K562 (cell line): ENCODE measurements at regions of chr12 and their contacts with region 1.

Region 1: DNA sequence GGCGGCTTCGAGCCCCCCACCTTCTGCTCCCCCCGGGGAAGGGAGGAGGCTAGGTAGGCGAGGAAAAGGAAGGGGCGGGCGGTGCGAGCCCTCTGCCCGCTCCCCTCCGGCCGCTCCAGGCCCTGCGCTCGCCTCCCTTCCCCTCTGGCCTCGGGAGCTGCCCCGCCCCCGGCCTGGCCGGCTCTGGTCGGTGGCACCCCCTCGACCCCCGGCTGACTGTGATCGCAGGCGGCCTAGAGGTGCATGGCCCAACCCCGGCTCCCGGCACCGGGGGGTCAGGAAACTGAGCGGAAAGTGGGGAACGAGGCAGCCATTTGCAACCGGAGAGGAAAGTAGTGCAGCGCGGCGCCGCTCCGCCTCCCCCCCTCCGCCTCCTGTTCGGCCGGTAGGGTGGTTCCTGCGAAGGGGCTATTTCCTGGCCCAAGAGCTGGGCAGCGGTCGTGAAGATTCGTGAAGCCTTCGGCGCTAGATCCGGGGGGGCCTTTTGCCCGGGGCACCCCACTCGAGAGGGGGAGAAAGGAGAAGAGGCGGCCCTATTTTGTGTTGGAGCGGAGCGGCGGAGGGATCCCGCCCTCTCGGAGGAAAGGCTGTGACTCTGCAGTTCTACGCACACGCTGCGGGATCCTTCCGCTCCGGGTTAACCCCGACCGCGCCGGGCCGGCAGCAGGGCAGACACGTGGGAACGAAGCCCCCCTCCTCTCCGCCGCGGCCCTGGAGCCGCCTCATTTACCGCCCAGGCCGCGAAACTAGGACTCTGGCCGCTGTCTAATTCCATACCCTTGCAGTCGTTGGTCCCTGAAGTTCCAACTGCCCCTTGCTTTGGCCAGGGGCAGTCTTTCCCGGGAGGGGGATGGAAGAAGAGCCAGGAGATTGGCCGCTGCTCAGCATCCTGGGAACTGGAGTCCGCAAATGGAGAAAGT is at the start of gene KMT2D:
- DNase-seq: peak; percentile 89 to 96 (median 91)
- ATAC-seq: peak; percentile 72
- H3K4me3 ChIP-seq: peak within 1 kb of the TSS; percentile 94
- H3K27ac ChIP-seq: peak within 1 kb of the TSS; percentile 98
- H3K4me1 ChIP-seq: peaks cover 15 to 20% of the 10 kb centered on the region in 2 experiments; a peak in 4 of 5 replicates
- H3K27me3 ChIP-seq: no peaks in the 10 kb centered on the region
- CTCF ChIP-seq: 0 out of 6 replicates have a peak, but pooled peaks of 2 of the 3 experiments have one; percentile 6 to 13
- EP300 ChIP-seq: peak; percentile 53; the same call in 1 of the 2 replicates
- POLR2A ChIP-seq: peak; percentile 88
- RAD21 ChIP-seq: no peak
- polyA plus RNA-seq, gene KMT2D: 0.22 to 1.4 TPM

Region 2: DNA sequence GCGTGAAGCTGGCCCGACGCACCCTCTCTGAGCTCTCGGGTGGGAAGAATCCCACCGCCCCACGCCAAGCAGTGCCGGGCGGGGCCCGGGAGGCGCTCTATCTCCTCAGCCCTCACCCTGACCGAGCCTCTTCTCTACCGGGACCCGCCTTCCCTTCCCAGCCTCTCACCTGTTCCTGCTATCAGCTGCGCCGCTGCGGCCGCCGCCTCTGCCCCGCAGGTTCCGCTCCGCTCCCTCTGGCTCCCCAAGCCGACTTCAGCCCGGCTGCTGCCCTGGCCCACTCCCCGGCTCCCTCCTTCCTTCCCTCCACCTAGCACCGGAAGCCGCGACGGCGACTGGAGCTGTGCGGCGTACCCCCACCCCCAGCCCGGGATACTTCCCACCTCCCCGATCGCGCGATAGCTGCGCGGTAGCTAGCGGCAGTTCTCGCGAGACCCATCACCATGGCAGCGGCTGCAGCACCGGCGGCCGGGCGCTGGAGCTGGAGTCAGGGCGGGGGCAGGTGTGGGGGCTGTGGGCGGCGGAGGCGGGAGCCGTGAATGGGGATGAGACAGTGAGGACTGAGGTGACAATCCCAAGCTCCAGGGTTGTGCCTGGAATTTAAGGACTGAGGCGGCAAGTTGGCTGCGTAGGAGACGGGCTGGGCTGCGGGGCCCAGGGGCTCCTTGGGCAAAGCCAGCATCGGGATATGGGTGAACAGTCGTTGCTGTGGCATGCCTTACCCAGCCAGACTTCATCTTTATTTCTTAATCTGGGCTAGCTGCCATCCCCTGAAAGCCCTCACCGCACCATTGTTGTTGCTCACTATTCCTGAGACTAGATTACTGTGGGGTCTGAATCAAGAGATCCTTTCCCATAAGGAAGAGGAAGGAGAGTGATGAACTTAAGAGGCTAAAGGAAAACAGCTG is 103.1 kb before region 1 on chr12 and contains the start of gene ARF3:
- CTCF ChIA-PET with region 1: no interaction called
- POLR2A ChIA-PET with region 1: no interaction called
- in situ Hi-C with region 1: no loop called
- intact Hi-C with region 1: no loop called
- DNase-seq: peak; percentile 96 to 97 (median 97)
- ATAC-seq: peak; percentile 94
- H3K4me3 ChIP-seq: peak within 1 kb of the TSS; percentile 89
- H3K27ac ChIP-seq: peak within 1 kb of the TSS; percentile 71
- H3K4me1 ChIP-seq: peaks cover 9 to 20% of the 10 kb centered on the region in 2 experiments; a peak in 4 of 5 replicates
- H3K27me3 ChIP-seq: no peaks in the 10 kb centered on the region
- CTCF ChIP-seq: peak in 2 of 3 experiments; percentile 4 to 48; a peak in 2 of 6 replicates
- EP300 ChIP-seq: no peak
- POLR2A ChIP-seq: peak; percentile 85
- RAD21 ChIP-seq: no peak
- polyA plus RNA-seq, gene ARF3: 5.9 to 7.4 TPM

Region 3: DNA sequence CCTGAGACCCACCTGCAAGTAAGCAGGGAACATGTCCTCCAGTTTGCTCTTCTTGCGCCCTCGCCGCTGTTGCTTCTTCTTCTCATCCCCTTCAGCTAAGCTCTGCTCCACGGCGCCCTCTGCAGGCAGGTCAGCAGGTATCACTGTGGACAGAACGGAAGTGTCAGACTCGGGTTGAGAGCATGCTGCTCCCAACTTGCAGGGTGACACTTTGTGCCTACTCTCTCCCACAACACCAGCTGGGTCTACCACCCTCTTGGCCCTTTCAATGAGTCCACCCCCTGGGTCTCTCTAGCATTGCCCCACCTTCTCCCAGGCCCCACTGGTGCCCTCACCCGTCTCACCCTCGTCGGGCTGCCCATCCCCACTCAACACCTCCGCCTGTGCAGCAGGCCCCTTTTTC is 16.6 kb before region 1 on chr12:
- CTCF ChIA-PET with region 1: no interaction called
- POLR2A ChIA-PET with region 1: interaction called, 21 read pairs
- in situ Hi-C with region 1: no loop called
- intact Hi-C with region 1: no loop called
- DNase-seq: peak; percentile 75 to 86 (median 80)
- ATAC-seq: peak; percentile 95
- H3K4me3 ChIP-seq: no peak overlapping the region
- H3K27ac ChIP-seq: no peak overlapping the region
- H3K4me1 ChIP-seq: no peaks in the 10 kb centered on the region
- H3K27me3 ChIP-seq: no peaks in the 10 kb centered on the region
- CTCF ChIP-seq: peak; percentile 79 to 94 (median 84)
- EP300 ChIP-seq: no peak
- POLR2A ChIP-seq: no peak
- RAD21 ChIP-seq: peak in 1 of 2 experiments; percentile 51; a peak in 2 of 4 replicates

Region 4: GRCh38 chr12:49049566-49050413 is 10.7 kb before region 1 on chr12:
- CTCF ChIA-PET with region 1: no interaction called
- POLR2A ChIA-PET with region 1: interaction called, 21 read pairs
- in situ Hi-C with region 1: no loop called
- intact Hi-C with region 1: no loop called
- DNase-seq: no peak
- ATAC-seq: no peak; the same call in 2 of the 3 replicates
- H3K4me3 ChIP-seq: no peak overlapping the region
- H3K27ac ChIP-seq: no peak overlapping the region; the same call in 2 of the 3 replicates
- H3K4me1 ChIP-seq: 0 out of 5 replicates have a peak, but pooled peaks cover 0 to 4% of the 10 kb centered on the region in 2 experiments
- H3K27me3 ChIP-seq: no peaks in the 10 kb centered on the region
- CTCF ChIP-seq: no peak
- EP300 ChIP-seq: no peak
- POLR2A ChIP-seq: peak; percentile 36; the same call in 1 of the 2 replicates
- RAD21 ChIP-seq: no peak

Region 5: DNA sequence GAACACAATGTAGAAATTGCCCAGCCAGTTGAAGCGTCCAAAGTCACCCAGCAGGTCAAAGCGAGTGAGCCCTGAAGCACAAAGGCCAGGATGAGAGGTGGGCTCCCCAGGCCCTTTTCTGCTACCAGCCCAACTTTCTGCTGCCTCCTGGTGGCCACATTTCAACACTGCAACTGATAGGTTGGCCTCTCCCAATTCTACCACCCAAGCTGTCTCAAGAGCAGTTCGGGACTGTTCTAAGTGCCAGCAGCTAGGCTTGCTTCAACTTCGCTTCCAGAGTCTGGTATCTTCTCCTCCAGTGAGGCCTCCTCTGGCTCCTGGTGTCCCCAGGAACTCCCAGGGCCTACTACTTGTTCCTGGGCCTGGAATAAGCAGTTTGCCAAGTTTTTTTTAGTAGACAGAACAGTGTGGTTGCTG is 37.5 kb after region 1 on chr12:
- CTCF ChIA-PET with region 1: interaction called, 7 read pairs
- POLR2A ChIA-PET with region 1: interaction called, 5 read pairs
- in situ Hi-C with region 1: loop called (anchors 5 kb)
- intact Hi-C with region 1: loop called (anchors 1 kb)
- DNase-seq: peak; percentile 68 to 78 (median 74)
- ATAC-seq: peak; percentile 76
- H3K4me3 ChIP-seq: no peak overlapping the region
- H3K27ac ChIP-seq: no peak overlapping the region; the same call in 2 of the 3 replicates
- H3K4me1 ChIP-seq: peaks cover 27 to 28% of the 10 kb centered on the region in 2 experiments
- H3K27me3 ChIP-seq: no peaks in the 10 kb centered on the region
- CTCF ChIP-seq: peak; percentile 86 to 94 (median 89)
- EP300 ChIP-seq: no peak
- POLR2A ChIP-seq: no peak
- RAD21 ChIP-seq: peak; percentile 64 to 85

Region 6: GRCh38 chr12:49369411-49370145 is 309.1 kb after region 1 on chr12:
- CTCF ChIA-PET with region 1: no interaction called
- POLR2A ChIA-PET with region 1: no interaction called
- in situ Hi-C with region 1: no loop called
- intact Hi-C with region 1: no loop called
- DNase-seq: peak; percentile 43 to 77 (median 58)
- ATAC-seq: peak; percentile 63
- H3K4me3 ChIP-seq: no peak overlapping the region
- H3K27ac ChIP-seq: peak overlapping the region; percentile 17; the same call in 2 of the 3 replicates
- H3K4me1 ChIP-seq: peaks cover 12 to 25% of the 10 kb centered on the region in 2 experiments; a peak in 3 of 5 replicates
- H3K27me3 ChIP-seq: no peaks in the 10 kb centered on the region
- CTCF ChIP-seq: peak; percentile 64 to 74 (median 66)
- EP300 ChIP-seq: no peak
- POLR2A ChIP-seq: no peak
- RAD21 ChIP-seq: peak in 1 of 2 experiments; percentile 43; a peak in 1 of 4 replicates